Panc1 (cell line): ENCODE measurements at regions of chrX and their contacts with region 1.

Region 1: GRCh38 chrX:111151764-111152163 is 55.8 kb downstream of the PAK3 start:
- DNase-seq: no peak
- ATAC-seq: no peak
- H3K4me3 ChIP-seq: no peak overlapping the region
- H3K27ac ChIP-seq: no peak overlapping the region
- H3K4me1 ChIP-seq: no peaks in the 10 kb centered on the region
- H3K27me3 ChIP-seq: no peaks in the 10 kb centered on the region
- CTCF ChIP-seq: no peak

Region 2: DNA sequence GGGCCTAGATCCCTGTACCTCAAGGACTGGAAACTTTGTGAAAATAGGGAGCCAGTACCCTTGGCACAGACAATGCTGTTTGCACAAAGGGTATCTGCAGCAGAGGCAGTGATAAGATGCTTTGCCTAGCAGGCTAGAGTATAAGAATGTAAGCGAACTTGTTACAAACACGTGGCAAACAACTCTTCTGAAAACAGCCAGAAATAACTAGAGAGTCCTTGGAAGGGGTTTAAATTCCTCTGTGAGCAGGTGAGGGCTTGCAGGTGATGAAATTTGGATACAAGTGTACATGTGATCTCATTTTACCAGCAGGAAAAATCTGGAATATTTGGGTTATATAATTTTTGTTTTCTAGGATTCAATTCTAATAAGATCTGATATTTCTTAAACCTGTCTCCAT is 1400.1 kb before region 1 on chrX:
- CTCF ChIA-PET with region 1: no interaction called
- POLR2A ChIA-PET with region 1: interaction called, 14 read pairs
- in situ Hi-C with region 1: no loop called
- intact Hi-C with region 1: no loop called
- DNase-seq: no peak
- ATAC-seq: no peak
- H3K4me3 ChIP-seq: no peak overlapping the region
- H3K27ac ChIP-seq: no peak overlapping the region
- H3K4me1 ChIP-seq: no peaks in the 10 kb centered on the region
- H3K27me3 ChIP-seq: no peaks in the 10 kb centered on the region
- CTCF ChIP-seq: no peak

Region 3: DNA sequence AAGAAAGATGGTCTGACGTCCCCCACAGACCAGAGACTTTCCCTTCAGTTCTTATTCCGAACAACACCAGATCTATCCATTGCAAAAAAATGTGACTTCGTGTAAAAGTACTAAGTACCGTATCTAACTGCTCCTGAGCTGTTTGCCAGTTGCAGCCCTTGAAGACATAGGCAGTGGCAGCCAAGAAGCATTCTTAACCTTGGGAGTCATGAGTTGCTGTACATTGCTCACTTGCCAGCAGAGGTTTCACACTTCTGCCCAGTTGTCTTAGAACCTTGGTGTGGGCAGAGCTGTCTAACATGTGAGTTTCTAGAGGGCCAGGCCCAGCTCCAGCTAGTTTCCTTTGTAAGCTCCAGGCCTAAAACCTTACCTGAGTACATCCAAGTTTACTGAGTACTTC is 345.6 kb before region 1 on chrX:
- CTCF ChIA-PET with region 1: no interaction called
- POLR2A ChIA-PET with region 1: no interaction called
- in situ Hi-C with region 1: no loop called
- intact Hi-C with region 1: no loop called
- DNase-seq: no peak
- ATAC-seq: no peak
- H3K4me3 ChIP-seq: no peak overlapping the region
- H3K27ac ChIP-seq: no peak overlapping the region
- H3K4me1 ChIP-seq: no peaks in the 10 kb centered on the region
- H3K27me3 ChIP-seq: no peaks in the 10 kb centered on the region
- CTCF ChIP-seq: no peak